Activated CD4-positive, alpha-beta T cell treated with anti-CD3 and anti-CD28 coated beads, Interleukin-2, amount 10 ng/mL, durations not matched to agents 24 days and 14 days (primary cell): ENCODE measurements at regions of chr3 and their contacts with region 1.

Region 1: DNA sequence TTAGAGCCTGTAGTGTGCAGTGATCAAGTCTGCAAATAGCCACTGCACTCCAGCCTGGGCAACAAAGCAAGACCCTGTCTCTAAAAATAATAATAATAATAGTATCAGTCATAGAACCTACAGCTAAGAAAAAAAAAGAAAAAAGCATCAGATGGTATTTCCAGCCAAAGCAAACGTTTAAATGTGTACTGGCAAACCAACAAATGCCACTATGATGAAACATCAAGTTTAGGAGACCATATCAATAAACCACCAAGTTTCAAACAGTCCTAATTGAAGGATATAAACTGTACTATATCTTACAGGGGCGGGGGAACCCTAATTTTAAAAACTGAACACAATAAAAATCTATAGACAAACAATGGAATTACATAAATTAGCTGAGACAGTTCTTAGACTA is 6.4 kb downstream of the UBP1 start:
- DNase-seq: no peak
- H3K4me3 Mint-ChIP-seq: no peak overlapping the region
- H3K27ac Mint-ChIP-seq: no peak overlapping the region
- H3K4me1 Mint-ChIP-seq: peaks cover 64% of the 10 kb centered on the region
- H3K27me3 Mint-ChIP-seq: no peaks in the 10 kb centered on the region

Region 2: GRCh38 chr3:33113772-33114621 is 319.8 kb before region 1 on chr3 and contains the start of gene CRTAP:
- intact Hi-C with region 1: no loop called
- DNase-seq: peak; percentile 95
- H3K4me3 Mint-ChIP-seq: peak within 1 kb of the TSS; percentile 84
- H3K27ac Mint-ChIP-seq: peak within 1 kb of the TSS; percentile 81
- H3K4me1 Mint-ChIP-seq: peaks cover 16% of the 10 kb centered on the region
- H3K27me3 Mint-ChIP-seq: peaks cover 2% of the 10 kb centered on the region
- total RNA-seq, gene CRTAP: 33.1 and 34.2 TPM in 2 replicates

Region 3: DNA sequence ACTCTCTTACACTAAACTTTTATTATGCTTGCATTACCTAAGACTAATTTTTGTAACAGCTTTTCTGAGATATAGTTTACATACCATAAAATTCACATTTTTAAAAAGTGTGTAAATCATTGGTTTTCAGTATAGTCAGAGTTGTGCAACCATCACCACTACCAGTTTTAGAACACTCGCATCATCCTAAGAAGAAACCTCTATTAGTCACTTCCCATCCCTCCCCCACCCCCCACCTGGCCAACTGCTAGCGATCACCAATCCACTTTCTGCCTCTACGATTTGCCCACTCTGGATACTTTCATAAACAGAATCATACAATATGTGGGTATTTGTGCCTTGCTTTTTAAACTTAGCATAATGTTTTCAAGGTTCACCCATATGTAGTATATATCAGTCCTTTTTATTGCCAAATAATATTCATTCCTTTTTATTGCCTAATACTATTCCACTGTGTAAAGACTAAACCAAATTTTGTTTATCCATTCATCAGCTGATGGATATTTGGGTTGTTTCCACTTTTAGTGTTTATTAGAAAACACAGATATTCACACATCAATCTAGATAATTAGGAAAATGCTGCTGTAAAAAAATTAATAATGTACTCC is 16.7 kb before region 1 on chr3:
- intact Hi-C with region 1: loop called (anchors 2 kb)
- DNase-seq: no peak
- H3K4me3 Mint-ChIP-seq: no peak overlapping the region
- H3K27ac Mint-ChIP-seq: no peak overlapping the region
- H3K4me1 Mint-ChIP-seq: peaks cover 16% of the 10 kb centered on the region
- H3K27me3 Mint-ChIP-seq: no peaks in the 10 kb centered on the region

Region 4: GRCh38 chr3:33447958-33448357 is 14.1 kb after region 1 on chr3:
- intact Hi-C with region 1: no loop called
- DNase-seq: no peak
- H3K4me3 Mint-ChIP-seq: no peak overlapping the region
- H3K27ac Mint-ChIP-seq: no peak overlapping the region
- H3K4me1 Mint-ChIP-seq: peaks cover 8% of the 10 kb centered on the region
- H3K27me3 Mint-ChIP-seq: no peaks in the 10 kb centered on the region